K562 (cell line): ENCODE measurements at regions of chr7 and their contacts with region 1.

Region 1: DNA sequence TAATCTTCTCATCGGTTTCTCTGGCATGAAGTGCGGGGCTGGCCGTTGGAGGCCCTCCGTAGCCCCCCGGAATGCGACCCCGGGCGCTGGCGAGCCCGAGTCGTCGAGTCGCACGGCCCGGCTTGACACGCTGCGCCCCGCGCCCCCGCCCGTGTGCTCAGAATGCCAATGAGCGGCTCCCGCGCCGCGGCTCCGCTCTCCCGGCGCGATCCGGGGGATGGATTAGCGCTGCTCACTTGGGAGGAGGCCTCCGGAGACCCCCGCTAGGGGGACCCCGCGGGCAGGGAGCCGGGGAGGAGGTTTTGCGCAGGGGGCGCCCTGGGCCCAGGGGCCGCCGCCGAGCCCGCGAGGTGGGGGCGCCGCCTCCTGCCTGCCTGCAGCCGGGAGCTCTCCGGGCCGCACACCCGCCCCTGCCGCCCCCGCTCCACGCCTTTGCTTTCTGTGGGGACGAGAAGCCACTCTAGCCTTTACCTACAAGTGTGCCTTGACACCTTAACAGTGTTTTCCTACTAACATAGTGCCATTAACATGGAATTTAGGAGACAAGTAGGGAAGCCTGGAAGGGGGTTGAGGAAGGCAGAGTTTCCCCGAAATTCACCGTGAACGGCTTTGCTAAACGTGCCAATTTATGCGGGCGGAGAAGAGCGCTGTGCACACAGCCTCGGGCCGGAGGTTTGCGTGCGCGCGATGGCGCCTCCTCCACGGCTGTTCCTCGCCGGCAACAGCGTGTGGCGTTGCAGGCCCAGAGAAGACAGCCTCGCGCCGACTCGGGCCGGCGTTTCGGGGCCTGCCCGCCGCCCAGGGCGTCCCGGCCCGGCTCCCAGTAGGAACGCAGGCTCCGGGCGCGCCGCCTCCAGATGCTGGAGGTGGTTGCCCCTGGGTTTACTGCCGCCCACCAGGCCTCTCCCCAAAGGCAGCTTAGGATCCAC is 7.1 kb downstream of the SHH start:
- DNase-seq: peak; percentile 79 to 98 (median 96)
- ATAC-seq: peak; percentile 92
- H3K4me3 ChIP-seq: peak overlapping the region; percentile 24
- H3K27ac ChIP-seq: no peak overlapping the region
- H3K4me1 ChIP-seq: peaks cover 0 to 40% of the 10 kb centered on the region in 2 experiments; a peak in 2 of 5 replicates
- H3K27me3 ChIP-seq: peaks cover 41 to 69% of the 10 kb centered on the region in 2 experiments
- CTCF ChIP-seq: peak; percentile 55 to 97 (median 82)
- EP300 ChIP-seq: no peak
- POLR2A ChIP-seq: no peak
- RAD21 ChIP-seq: peak; percentile 35 to 73; a peak in 3 of 4 replicates

Region 2: DNA sequence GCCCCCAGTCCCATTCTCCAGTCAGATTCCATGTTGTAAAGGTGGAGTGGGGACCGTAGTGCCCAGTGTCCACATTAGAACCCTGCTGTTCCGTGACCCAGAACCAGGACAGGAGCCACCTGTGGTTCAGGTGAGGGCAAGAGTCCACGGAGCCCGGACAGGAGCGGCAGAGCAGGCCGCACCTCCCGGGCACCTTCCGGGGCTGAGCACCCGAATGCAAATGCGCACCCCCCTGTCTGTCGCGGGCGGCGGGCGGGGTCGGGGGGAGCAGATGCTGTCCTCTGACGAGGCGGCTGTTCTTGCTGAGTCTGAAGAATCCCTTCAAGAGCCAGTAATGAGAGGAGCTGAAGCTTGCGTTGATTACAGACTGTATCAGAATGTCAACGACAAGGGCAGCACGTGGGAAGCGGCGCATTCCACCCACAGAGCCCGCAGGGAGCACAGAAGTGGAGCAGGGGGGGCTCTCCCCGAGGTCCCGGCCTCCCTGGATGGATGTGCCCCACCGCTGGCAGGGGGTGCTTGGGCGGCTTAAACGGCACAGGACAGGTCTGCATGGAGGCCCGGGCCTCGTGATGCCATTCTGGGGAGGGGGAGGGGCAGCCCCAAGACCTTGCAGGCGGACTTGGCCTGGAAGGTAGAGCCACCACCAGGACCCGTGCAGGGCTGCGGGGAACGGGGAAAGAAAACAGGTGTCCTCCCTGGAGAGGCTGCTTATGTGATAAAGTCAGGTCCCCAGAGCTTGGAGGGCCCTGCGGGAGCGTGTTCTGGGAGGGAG is 428.0 kb after region 1 on chr7:
- CTCF ChIA-PET with region 1: no interaction called
- POLR2A ChIA-PET with region 1: no interaction called
- in situ Hi-C with region 1: no loop called
- intact Hi-C with region 1: no loop called
- DNase-seq: no peak
- ATAC-seq: no peak; the same call in 2 of the 3 replicates
- H3K4me3 ChIP-seq: no peak overlapping the region
- H3K27ac ChIP-seq: no peak overlapping the region
- H3K4me1 ChIP-seq: peaks cover 0 to 6% of the 10 kb centered on the region in 2 experiments; a peak in 1 of 5 replicates
- H3K27me3 ChIP-seq: peaks cover 29 to 66% of the 10 kb centered on the region in 2 experiments
- CTCF ChIP-seq: no peak
- EP300 ChIP-seq: no peak
- POLR2A ChIP-seq: no peak
- RAD21 ChIP-seq: no peak

Region 3: DNA sequence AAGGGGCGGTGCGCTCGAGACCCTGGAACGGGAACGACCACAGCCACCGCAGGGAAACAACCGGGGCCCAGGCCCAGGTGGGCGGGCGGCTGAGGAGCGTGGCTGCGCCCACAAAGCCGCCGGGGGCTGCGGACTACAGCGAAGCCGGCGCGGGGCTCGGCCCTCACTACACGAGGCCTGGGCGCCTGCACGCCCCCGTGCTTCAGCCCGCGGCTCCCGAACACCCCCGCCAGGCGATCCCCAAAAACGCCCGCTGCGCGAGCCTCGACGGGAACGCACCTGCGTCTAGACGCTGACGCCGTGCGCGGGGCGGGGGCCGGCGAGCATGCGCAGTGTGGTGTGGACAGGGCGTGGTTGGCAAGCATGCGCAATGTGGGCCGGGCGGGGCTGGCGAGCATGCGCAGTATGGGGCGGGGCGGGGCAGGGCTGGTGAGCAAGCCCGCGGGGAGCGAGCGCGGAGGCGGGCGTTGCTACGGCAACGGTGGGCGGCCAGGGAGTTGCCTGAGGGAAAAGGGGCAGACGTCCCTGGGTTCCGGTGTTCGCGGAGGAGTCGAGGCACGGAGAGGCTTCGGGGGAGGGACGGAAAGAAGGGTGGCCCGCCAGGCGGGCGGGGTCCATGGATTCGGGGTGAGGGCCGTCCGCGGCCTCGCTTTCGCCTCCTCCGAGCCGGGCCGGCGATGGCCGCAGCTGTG is 835.2 kb after region 1 on chr7 and contains the start of gene RNF32:
- CTCF ChIA-PET with region 1: no interaction called
- POLR2A ChIA-PET with region 1: no interaction called
- in situ Hi-C with region 1: no loop called
- intact Hi-C with region 1: loop called (anchors 10 kb)
- DNase-seq: peak; percentile 100
- ATAC-seq: peak; percentile 80
- H3K4me3 ChIP-seq: peak within 1 kb of the TSS; percentile 71
- H3K27ac ChIP-seq: peak within 1 kb of the TSS; percentile 92
- H3K4me1 ChIP-seq: peaks cover 5 to 20% of the 10 kb centered on the region in 2 experiments; a peak in 4 of 5 replicates
- H3K27me3 ChIP-seq: no peaks in the 10 kb centered on the region
- CTCF ChIP-seq: peak in 1 of 3 experiments; percentile 28; a peak in 2 of 6 replicates
- EP300 ChIP-seq: peak; percentile 9; the same call in 1 of the 2 replicates
- POLR2A ChIP-seq: peak; percentile 90
- RAD21 ChIP-seq: 0 out of 4 replicates have a peak, but pooled peaks of 1 of the 2 experiments have one; percentile 3
- polyA plus RNA-seq, gene RNF32: 3.2 to 3.7 TPM